ENCODE measurements at regions of chr9 and their contacts with region 1.

Region 1: DNA sequence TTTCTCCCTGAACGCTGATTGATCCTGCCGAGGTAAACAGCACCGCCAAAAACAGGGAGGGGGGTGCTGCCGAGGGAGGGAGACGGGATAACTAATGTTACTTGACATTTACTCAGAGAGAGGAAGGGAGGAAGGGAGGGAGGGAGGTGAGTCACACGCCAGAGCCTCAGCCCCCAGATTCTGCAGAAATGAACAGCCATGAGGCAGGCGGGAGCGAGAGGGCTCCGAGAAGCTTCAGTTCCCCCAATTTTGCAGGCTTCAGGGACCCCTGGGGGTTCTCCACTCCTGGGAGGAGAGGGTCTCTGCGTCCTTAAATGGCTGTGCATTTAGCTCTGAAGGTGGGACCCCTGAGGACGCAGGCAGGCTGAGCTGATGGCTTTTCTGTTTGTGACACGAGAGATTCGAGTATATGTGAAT is 59.1 kb upstream of the IER5L start:
- DNase-seq: peak in 7 of 10 donors; percentile 31 to 70 (median 45)
- ATAC-seq: peak; percentile 39 to 65
- H3K4me3 Mint-ChIP-seq: peak overlapping the region; percentile 87 to 97 (median 92)
- H3K27ac Mint-ChIP-seq: peak overlapping the region; percentile 92 to 99 (median 96)
- H3K4me1 Mint-ChIP-seq: peaks cover 41 to 83% (median 70%) of the 10 kb centered on the region in 4 donors
- H3K27me3 Mint-ChIP-seq: peaks cover 0 to 1% (median 0%) of the 10 kb centered on the region in 5 donors

Region 2: DNA sequence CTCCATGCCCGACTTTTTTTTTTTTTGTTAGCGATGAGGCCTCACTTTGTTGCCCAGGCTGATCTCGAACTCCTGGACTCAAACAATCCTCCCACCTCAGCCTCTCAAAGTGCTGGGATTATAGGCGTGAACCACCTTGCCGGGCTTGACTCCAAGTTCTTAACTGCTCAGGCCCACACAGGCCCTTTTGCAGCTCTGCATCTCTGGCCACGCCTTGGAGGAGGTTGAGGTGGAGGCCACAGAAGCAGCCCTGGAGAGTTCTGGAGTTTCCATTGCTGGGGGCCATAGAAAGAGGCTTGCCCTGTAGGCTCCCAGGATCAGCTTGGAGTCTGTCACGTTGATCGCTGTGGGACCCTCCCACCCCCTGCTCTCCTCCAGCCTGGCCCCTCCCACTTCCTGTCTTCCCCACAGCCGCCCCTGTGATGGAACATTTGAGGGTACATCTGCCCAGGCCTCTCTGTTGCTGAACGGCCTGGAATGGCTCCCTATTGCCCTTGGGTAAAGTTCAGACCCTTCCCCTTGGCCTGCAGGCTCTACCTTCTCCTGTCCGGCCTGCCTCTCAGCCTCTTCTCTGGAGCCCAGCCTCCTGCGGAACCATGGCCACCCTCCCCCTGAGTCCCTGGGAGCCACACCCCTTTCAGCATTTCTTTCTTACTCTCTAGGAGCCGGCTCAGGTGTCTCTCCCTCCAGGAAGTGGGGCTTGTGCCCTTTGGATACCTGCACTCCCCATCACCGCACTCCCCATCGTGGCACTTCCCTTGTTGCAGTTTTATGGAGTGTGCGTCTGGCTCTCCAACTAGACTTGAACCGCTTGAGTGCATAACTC is 28.8 kb before region 1 on chr9:
- POLR2A ChIA-PET with region 1: interaction called, 81 read pairs
- DNase-seq: peak; percentile 27 to 82 (median 50)
- ATAC-seq: peak; percentile 63 to 80
- H3K4me3 Mint-ChIP-seq: peak overlapping the region; percentile 76 to 95 (median 88)
- H3K27ac Mint-ChIP-seq: peak overlapping the region; percentile 83 to 98 (median 95)
- H3K4me1 Mint-ChIP-seq: peaks cover 24 to 58% (median 41%) of the 10 kb centered on the region in 4 donors
- H3K27me3 Mint-ChIP-seq: no peaks in the 10 kb centered on the region

Region 3: GRCh38 chr9:129225815-129226214 is 11.4 kb before region 1 on chr9:
- POLR2A ChIA-PET with region 1: interaction called, 37 read pairs
- DNase-seq: peak in 9 of 10 donors; percentile 32 to 73 (median 49)
- ATAC-seq: peak; percentile 82 to 85
- H3K4me3 Mint-ChIP-seq: peak overlapping the region in 9 of 10 donors; percentile 36 to 80 (median 60)
- H3K27ac Mint-ChIP-seq: peak overlapping the region; percentile 56 to 98 (median 83)
- H3K4me1 Mint-ChIP-seq: peaks cover 26 to 60% (median 49%) of the 10 kb centered on the region in 4 donors
- H3K27me3 Mint-ChIP-seq: no peaks in the 10 kb centered on the region

Region 4: GRCh38 chr9:129247820-129248153 is 10.6 kb after region 1 on chr9:
- POLR2A ChIA-PET with region 1: interaction called, 12 read pairs
- DNase-seq: peak in 1 of 10 donors; percentile 24
- ATAC-seq: no peak
- H3K4me3 Mint-ChIP-seq: no peak overlapping the region
- H3K27ac Mint-ChIP-seq: no peak overlapping the region
- H3K4me1 Mint-ChIP-seq: peaks cover 6 to 18% (median 9%) of the 10 kb centered on the region in 4 donors
- H3K27me3 Mint-ChIP-seq: no peaks in the 10 kb centered on the region

Region 5: GRCh38 chr9:129258124-129258822 is 21.1 kb after region 1 on chr9:
- POLR2A ChIA-PET with region 1: interaction called, 31 read pairs
- DNase-seq: peak; percentile 81 to 95 (median 91)
- ATAC-seq: peak; percentile 94
- H3K4me3 Mint-ChIP-seq: peak overlapping the region; percentile 70 to 90 (median 84)
- H3K27ac Mint-ChIP-seq: peak overlapping the region in 9 of 10 donors; percentile 11 to 93 (median 68)
- H3K4me1 Mint-ChIP-seq: peaks cover 23 to 33% (median 27%) of the 10 kb centered on the region in 4 donors
- H3K27me3 Mint-ChIP-seq: peaks cover 0 to 20% (median 0%) of the 10 kb centered on the region in 5 donors

Region 6: GRCh38 chr9:129320575-129321263 is 83.5 kb after region 1 on chr9:
- POLR2A ChIA-PET with region 1: interaction called, 11 read pairs
- DNase-seq: peak in 9 of 10 donors; percentile 47 to 79 (median 67)
- ATAC-seq: peak; percentile 93 to 97
- H3K4me3 Mint-ChIP-seq: peak overlapping the region; percentile 74 to 94 (median 89)
- H3K27ac Mint-ChIP-seq: peak overlapping the region; percentile 59 to 96 (median 90)
- H3K4me1 Mint-ChIP-seq: peaks cover 10 to 26% (median 17%) of the 10 kb centered on the region in 4 donors
- H3K27me3 Mint-ChIP-seq: peaks cover 0 to 3% (median 0%) of the 10 kb centered on the region in 5 donors

Region 7: GRCh38 chr9:129333953-129334724 is 96.9 kb after region 1 on chr9:
- POLR2A ChIA-PET with region 1: interaction called, 22 read pairs
- DNase-seq: peak in 7 of 10 donors; percentile 23 to 68 (median 28)
- ATAC-seq: peak; percentile 60 to 66
- H3K4me3 Mint-ChIP-seq: peak overlapping the region; percentile 26 to 97 (median 81)
- H3K27ac Mint-ChIP-seq: peak overlapping the region; percentile 12 to 94 (median 86)
- H3K4me1 Mint-ChIP-seq: peaks cover 22 to 41% (median 32%) of the 10 kb centered on the region in 4 donors
- H3K27me3 Mint-ChIP-seq: no peaks in the 10 kb centered on the region

Region 8: DNA sequence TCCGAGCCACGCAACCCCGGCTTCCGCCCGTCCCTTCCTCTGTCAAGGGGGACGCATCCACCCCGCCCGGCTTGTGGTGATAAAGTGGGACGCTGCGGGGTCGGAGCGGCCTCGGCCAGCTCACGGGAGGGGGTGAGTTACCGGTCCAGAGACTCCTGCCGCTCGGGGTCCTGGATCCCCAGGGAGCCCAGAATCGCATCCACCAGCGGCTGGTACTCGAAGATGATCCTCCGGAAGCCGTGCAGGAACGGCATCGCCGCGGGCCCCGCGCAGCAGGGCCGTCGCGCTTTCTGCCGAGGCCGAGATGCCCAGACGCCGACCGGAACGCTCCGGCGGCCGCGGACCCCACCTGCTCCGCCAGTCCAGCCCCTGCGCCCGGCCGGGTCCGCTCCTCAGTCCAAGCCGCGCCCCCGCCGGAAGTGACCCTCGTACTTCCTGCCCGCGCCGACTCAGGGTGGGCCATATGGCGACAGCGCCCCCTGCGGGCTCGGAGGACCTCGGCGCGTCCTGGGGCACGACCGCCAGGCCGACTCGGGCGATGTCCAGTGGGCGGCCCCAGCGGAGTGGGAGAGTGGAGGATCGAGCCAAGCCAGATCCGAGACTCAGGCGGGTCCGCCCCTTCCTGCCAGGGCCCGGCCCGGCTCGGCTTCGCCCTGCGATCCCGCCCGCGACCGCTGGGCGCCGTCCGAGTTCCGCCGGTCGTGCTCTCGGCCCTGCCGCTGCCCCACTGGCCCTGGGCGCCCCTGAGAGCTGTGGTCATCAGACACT is 404.7 kb after region 1 on chr9 and contains the start of gene ASB6:
- POLR2A ChIA-PET with region 1: no interaction called
- DNase-seq: peak; percentile 72 to 96 (median 89)
- ATAC-seq: peak; percentile 84 to 86
- H3K4me3 Mint-ChIP-seq: peak within 1 kb of the TSS; percentile 78 to 90 (median 84)
- H3K27ac Mint-ChIP-seq: peak within 1 kb of the TSS; percentile 76 to 96 (median 90)
- H3K4me1 Mint-ChIP-seq: peaks cover 10 to 22% (median 20%) of the 10 kb centered on the region in 4 donors
- H3K27me3 Mint-ChIP-seq: no peaks in the 10 kb centered on the region
- polyA plus RNA-seq, gene ASB6: 14.8 to 29.1 (median 19.8) TPM